MCF 10A (cell line): ENCODE measurements at regions of chr16 and their contacts with region 1.

Region 1: GRCh38 chr16:51146256-51146924 is 4.7 kb downstream of the SALL1 start:
- DNase-seq: no peak
- H3K4me3 Mint-ChIP-seq: no peak overlapping the region
- H3K27ac Mint-ChIP-seq: no peak overlapping the region
- H3K4me1 Mint-ChIP-seq: peaks cover 16% of the 10 kb centered on the region
- H3K27me3 Mint-ChIP-seq: no peaks in the 10 kb centered on the region
- CTCF ChIP-seq: peak; percentile 17

Region 2: DNA sequence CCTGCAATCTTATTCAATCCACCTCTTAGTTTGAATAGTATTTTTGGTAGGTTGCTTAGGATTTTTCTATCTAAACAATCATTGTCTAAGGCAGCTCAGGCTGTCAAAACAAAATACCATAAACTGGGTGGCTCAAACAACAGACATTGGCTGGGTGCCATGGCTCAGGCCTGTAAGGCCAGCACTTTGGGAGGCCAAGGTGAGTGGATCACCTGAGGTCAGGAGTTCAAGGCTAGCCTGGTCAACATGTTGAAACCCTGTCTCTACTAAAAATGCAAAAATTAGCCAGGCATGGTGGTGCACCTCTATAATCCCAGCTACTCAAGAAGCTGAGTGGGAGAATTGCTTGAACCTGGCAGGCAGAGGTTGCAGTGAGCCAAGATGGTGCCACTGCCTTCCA is 277.8 kb before region 1 on chr16:
- CTCF ChIA-PET with region 1: no interaction called
- POLR2A ChIA-PET with region 1: no interaction called
- intact Hi-C with region 1: no loop called
- DNase-seq: no peak
- H3K4me3 Mint-ChIP-seq: no peak overlapping the region
- H3K27ac Mint-ChIP-seq: no peak overlapping the region
- H3K4me1 Mint-ChIP-seq: peaks cover 3% of the 10 kb centered on the region
- H3K27me3 Mint-ChIP-seq: no peaks in the 10 kb centered on the region
- CTCF ChIP-seq: no peak

Region 3: GRCh38 chr16:51045186-51045585 is 101.2 kb before region 1 on chr16:
- CTCF ChIA-PET with region 1: no interaction called
- POLR2A ChIA-PET with region 1: no interaction called
- intact Hi-C with region 1: no loop called
- DNase-seq: no peak
- H3K4me3 Mint-ChIP-seq: no peak overlapping the region
- H3K27ac Mint-ChIP-seq: no peak overlapping the region
- H3K4me1 Mint-ChIP-seq: peaks cover 7% of the 10 kb centered on the region
- H3K27me3 Mint-ChIP-seq: peaks cover 9% of the 10 kb centered on the region
- CTCF ChIP-seq: no peak

Region 4: DNA sequence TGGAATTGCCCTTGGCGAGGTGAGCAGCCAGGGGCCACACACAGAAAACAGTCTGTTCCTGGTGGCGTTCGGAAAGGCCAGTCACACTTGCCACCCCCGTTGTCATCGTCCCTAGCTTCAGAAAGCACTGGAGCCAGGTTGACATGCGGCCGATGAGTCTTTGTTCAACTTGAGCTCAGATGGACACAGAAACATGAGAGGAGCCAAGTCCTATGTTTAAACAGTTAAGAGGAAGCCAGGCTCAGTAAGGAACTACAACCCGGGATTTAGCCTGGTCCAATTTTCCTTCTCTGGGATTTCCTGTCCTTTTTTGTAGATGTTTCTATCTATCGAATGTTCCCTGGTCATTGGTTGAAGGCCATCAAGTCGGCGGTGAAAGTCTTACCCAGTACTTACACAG is 14.8 kb before region 1 on chr16:
- CTCF ChIA-PET with region 1: no interaction called
- POLR2A ChIA-PET with region 1: no interaction called
- intact Hi-C with region 1: no loop called
- DNase-seq: no peak
- H3K4me3 Mint-ChIP-seq: no peak overlapping the region
- H3K27ac Mint-ChIP-seq: no peak overlapping the region
- H3K4me1 Mint-ChIP-seq: no peaks in the 10 kb centered on the region
- H3K27me3 Mint-ChIP-seq: no peaks in the 10 kb centered on the region
- CTCF ChIP-seq: no peak

Region 5: DNA sequence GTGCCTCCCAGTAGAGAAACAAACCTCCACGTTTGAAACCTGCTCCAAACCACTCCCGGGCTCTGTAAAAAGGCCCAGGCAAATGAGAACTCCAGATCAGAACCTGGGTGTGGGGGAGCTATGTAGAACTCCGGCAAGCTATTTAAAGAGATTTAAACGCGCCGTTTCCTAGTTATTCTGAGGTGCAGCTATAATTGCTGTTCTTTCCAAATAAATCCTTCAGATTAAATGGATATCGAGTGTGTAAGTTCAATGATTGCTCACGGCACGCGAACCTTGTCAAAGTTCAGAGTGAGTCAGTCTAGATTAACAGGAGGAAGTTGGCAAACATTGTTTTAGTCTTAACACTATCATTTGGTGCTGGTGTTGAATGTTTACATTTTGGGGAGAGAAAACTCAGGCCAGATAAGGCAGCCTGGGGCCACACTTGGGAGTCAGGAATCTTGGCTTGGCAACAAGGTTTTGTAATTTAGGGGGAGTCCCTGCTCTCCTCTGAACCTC is 97.6 kb after region 1 on chr16:
- CTCF ChIA-PET with region 1: no interaction called
- POLR2A ChIA-PET with region 1: no interaction called
- intact Hi-C with region 1: no loop called
- DNase-seq: peak; percentile 62
- H3K4me3 Mint-ChIP-seq: no peak overlapping the region
- H3K27ac Mint-ChIP-seq: peak overlapping the region; percentile 4
- H3K4me1 Mint-ChIP-seq: peaks cover 12% of the 10 kb centered on the region
- H3K27me3 Mint-ChIP-seq: peaks cover 34% of the 10 kb centered on the region
- CTCF ChIP-seq: no peak

Region 6: DNA sequence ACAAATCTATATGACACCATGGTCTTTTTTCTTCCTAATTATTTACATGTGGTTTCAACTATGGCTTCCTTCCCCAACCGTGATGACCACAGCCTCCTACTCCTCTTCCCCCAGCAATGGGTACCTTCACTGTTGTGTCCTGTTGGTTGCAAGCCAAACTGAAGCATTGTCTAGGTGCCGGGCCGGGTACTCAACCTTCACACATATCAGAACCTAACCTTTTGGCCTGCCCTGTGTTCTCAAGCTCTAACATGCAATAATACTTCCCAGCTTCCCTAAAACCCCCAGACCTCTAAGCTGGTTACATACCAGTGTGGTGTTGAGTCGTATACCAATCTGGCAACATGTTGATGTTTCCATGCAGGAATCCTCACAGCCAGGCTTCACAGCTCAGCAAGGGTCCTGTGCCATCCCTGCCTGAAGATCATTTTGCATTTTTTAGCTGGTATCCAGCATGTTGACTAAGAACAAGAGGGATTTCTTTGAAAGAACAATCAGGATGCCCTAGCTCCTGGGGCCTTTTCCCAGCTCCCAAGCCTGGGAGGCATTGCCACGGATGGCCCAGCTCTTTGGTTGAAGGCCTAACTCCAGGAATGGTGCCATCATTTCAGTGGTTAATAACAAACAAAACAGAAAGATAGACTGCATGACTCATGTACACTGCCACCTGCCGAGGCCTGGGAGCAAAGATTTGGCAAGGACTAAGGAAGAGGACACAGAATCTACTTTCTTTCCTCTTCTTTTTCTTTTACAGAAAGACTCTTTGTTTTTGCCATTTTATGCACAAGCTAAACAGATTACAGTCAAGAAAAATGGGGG is 378.4 kb after region 1 on chr16:
- CTCF ChIA-PET with region 1: no interaction called
- POLR2A ChIA-PET with region 1: no interaction called
- intact Hi-C with region 1: loop called (anchors 10 kb)
- DNase-seq: peak; percentile 81
- H3K4me3 Mint-ChIP-seq: no peak overlapping the region
- H3K27ac Mint-ChIP-seq: peak overlapping the region; percentile 52
- H3K4me1 Mint-ChIP-seq: peaks cover 11% of the 10 kb centered on the region
- H3K27me3 Mint-ChIP-seq: no peaks in the 10 kb centered on the region
- CTCF ChIP-seq: peak; percentile 19

Region 7: GRCh38 chr16:51762081-51762996 is 615.9 kb after region 1 on chr16:
- CTCF ChIA-PET with region 1: interaction called, 5 read pairs
- POLR2A ChIA-PET with region 1: interaction called, 4 read pairs
- intact Hi-C with region 1: loop called (anchors 1 kb)
- DNase-seq: peak; percentile 76
- H3K4me3 Mint-ChIP-seq: no peak overlapping the region
- H3K27ac Mint-ChIP-seq: no peak overlapping the region
- H3K4me1 Mint-ChIP-seq: no peaks in the 10 kb centered on the region
- H3K27me3 Mint-ChIP-seq: no peaks in the 10 kb centered on the region
- CTCF ChIP-seq: peak; percentile 90